ENCODE measurements at regions of chr21 and their contacts with region 1.

Region 1: DNA sequence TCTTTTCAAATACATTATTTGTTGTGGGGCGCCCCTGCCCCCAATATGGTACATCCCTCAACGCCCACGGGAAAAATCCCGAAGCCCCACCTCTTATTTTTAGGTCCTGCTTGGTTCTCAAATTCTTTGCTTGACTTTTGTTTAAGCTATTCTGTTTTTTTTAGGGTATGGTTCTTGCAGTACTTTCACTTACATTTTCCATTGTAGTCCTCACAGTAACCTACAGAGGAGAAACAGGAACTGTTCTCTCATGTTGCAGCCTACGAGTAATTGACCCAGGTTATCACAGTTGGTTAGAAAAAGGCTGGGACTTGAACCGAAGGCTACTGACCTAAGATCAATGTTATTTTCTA is 697 bp upstream of the C21orf91 start:
- DNase-seq: no peak
- H3K4me3 ChIP-seq: peak overlapping the region; percentile 72 to 100 (median 97)
- H3K27ac ChIP-seq: peak overlapping the region; percentile 88 to 98 (median 95)
- H3K4me1 ChIP-seq: peaks cover 5 to 35% (median 26%) of the 10 kb centered on the region in 4 donors
- H3K27me3 ChIP-seq: no peaks in the 10 kb centered on the region
- CTCF ChIP-seq: no peak
- EP300 ChIP-seq: no peak
- POLR2A ChIP-seq: no peak

Region 2: DNA sequence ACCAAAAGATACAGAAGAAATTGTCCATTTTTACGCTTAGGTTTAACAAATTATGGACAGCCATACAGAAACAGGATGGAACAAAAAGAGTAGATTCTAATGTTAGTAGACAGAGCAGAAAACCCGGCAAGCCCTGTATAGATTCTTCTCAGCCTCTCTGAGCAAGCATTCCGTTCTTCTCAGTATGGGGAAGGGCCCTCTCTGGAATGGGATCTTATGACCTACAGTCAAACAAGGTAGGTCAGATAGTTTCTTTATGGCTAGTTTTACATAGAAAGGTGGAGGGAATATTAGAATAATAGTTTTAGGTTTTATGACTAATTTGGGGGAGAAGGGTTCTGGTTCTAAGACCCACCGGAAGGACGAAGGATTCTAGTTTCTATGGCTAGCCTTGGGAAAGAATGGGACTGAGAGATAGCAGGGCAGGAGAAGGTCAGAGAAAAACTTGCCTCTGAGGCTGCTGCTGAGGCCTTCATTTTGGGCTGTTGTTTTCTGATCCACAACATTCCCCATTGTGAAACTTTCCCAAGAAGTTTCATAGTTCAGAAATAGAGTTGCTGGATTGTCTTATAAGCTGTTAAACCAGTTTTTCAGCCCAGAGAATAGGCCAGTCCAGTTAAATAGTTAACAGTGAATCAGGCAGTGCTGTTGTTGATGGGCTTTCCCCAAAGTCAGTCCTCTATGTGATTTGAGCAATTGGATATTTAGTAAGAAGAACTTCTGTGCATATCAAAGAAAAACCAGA is 77.9 kb before region 1 on chr21:
- intact Hi-C with region 1: loop called (anchors 10 kb)
- DNase-seq: no peak
- H3K4me3 ChIP-seq: no peak overlapping the region
- H3K27ac ChIP-seq: no peak overlapping the region
- H3K4me1 ChIP-seq: peaks cover 0 to 5% (median 0%) of the 10 kb centered on the region in 4 donors
- H3K27me3 ChIP-seq: no peaks in the 10 kb centered on the region
- CTCF ChIP-seq: no peak
- EP300 ChIP-seq: no peak
- POLR2A ChIP-seq: no peak

Region 3: GRCh38 chr21:17900281-17900989 is 80.6 kb after region 1 on chr21:
- intact Hi-C with region 1: no loop called
- DNase-seq: no peak
- H3K4me3 ChIP-seq: no peak overlapping the region
- H3K27ac ChIP-seq: no peak overlapping the region
- H3K4me1 ChIP-seq: peaks cover 0 to 5% (median 0%) of the 10 kb centered on the region in 4 donors
- H3K27me3 ChIP-seq: no peaks in the 10 kb centered on the region
- CTCF ChIP-seq: no peak
- EP300 ChIP-seq: no peak
- POLR2A ChIP-seq: no peak

Region 4: DNA sequence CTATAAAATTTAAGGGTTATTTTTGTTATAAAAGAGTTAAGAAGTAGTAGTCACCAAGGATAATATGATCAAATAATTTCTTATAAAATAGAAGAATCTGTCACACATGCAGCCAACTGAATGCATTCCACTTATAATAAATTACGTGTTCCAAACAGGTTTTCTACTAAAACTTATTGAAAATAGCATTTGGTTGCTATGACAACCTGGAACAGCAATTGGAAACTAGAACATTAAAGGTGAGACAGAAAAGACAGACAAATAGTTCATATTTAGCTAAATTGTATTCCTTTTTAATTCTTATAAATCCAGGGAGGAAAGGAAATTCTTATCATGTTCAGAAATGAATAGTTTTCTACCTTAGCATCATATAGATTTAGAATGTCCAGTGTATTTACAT is 415.7 kb after region 1 on chr21:
- intact Hi-C with region 1: no loop called
- DNase-seq: no peak
- H3K4me3 ChIP-seq: no peak overlapping the region
- H3K27ac ChIP-seq: no peak overlapping the region
- H3K4me1 ChIP-seq: no peaks in the 10 kb centered on the region
- H3K27me3 ChIP-seq: no peaks in the 10 kb centered on the region
- CTCF ChIP-seq: no peak
- EP300 ChIP-seq: no peak
- POLR2A ChIP-seq: no peak